PC-9 (cell line): ENCODE measurements at regions of chr16 and their contacts with region 1.

Region 1: GRCh38 chr16:27109666-27110523 is 43.2 kb downstream of the C16orf82 start:
- DNase-seq: peak in 1 of 2 experiments; percentile 82
- H3K4me3 ChIP-seq: no peak overlapping the region
- H3K27ac ChIP-seq: no peak overlapping the region
- H3K4me1 ChIP-seq: no peaks in the 10 kb centered on the region
- H3K27me3 ChIP-seq: peaks cover 77% of the 10 kb centered on the region
- CTCF ChIP-seq: peak; percentile 76

Region 2: GRCh38 chr16:25888868-25889267 is 1221.0 kb before region 1 on chr16:
- CTCF ChIA-PET with region 1: interaction called, 10 read pairs
- POLR2A ChIA-PET with region 1: no interaction called
- intact Hi-C with region 1: no loop called
- DNase-seq: no peak
- H3K4me3 ChIP-seq: no peak overlapping the region
- H3K27ac ChIP-seq: no peak overlapping the region
- H3K4me1 ChIP-seq: no peaks in the 10 kb centered on the region
- H3K27me3 ChIP-seq: peaks cover 32% of the 10 kb centered on the region
- CTCF ChIP-seq: no peak

Region 3: GRCh38 chr16:26795184-26795583 is 314.7 kb before region 1 on chr16:
- CTCF ChIA-PET with region 1: interaction called, 13 read pairs
- POLR2A ChIA-PET with region 1: no interaction called
- intact Hi-C with region 1: no loop called
- DNase-seq: no peak
- H3K4me3 ChIP-seq: no peak overlapping the region
- H3K27ac ChIP-seq: no peak overlapping the region
- H3K4me1 ChIP-seq: no peaks in the 10 kb centered on the region
- H3K27me3 ChIP-seq: peaks cover 30% of the 10 kb centered on the region
- CTCF ChIP-seq: no peak

Region 4: DNA sequence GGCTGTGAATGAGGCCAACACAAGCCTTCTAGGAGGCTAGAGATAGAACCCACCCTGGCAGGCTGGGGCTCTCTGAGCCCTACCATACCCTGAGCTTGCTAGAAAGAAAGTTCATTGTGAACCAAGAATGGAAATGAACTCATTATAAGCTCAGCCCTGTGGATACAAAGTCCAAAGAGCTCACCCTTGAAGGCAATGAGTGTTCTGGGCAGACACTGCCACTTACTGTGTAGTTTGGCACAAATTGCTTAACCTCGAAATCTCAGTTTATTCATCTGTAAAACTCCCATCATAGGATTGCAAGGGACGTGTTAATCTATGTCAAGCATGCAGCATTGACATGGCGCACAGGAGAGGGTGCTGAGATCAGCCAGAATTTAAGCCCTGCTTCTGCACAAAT is 98.9 kb after region 1 on chr16:
- CTCF ChIA-PET with region 1: interaction called, 13 read pairs
- POLR2A ChIA-PET with region 1: interaction called, 5 read pairs
- intact Hi-C with region 1: no loop called
- DNase-seq: no peak
- H3K4me3 ChIP-seq: no peak overlapping the region
- H3K27ac ChIP-seq: no peak overlapping the region
- H3K4me1 ChIP-seq: peaks cover 11% of the 10 kb centered on the region
- H3K27me3 ChIP-seq: no peaks in the 10 kb centered on the region
- CTCF ChIP-seq: no peak

Region 5: GRCh38 chr16:27367461-27368357 is 257.8 kb after region 1 on chr16:
- CTCF ChIA-PET with region 1: interaction called, 16 read pairs
- POLR2A ChIA-PET with region 1: no interaction called
- intact Hi-C with region 1: no loop called
- DNase-seq: peak; percentile 52 to 70
- H3K4me3 ChIP-seq: no peak overlapping the region
- H3K27ac ChIP-seq: no peak overlapping the region
- H3K4me1 ChIP-seq: peaks cover 36% of the 10 kb centered on the region
- H3K27me3 ChIP-seq: no peaks in the 10 kb centered on the region
- CTCF ChIP-seq: peak; percentile 84

Region 6: GRCh38 chr16:27436921-27437650 is 327.2 kb after region 1 on chr16:
- CTCF ChIA-PET with region 1: no interaction called
- POLR2A ChIA-PET with region 1: no interaction called
- intact Hi-C with region 1: no loop called
- DNase-seq: no peak
- H3K4me3 ChIP-seq: no peak overlapping the region
- H3K27ac ChIP-seq: no peak overlapping the region
- H3K4me1 ChIP-seq: no peaks in the 10 kb centered on the region
- H3K27me3 ChIP-seq: 0 out of 2 replicates have a peak, but pooled peaks cover 7% of the 10 kb centered on the region
- CTCF ChIP-seq: no peak